ENCODE measurements at regions of chr15 and their contacts with region 1.

Region 1: DNA sequence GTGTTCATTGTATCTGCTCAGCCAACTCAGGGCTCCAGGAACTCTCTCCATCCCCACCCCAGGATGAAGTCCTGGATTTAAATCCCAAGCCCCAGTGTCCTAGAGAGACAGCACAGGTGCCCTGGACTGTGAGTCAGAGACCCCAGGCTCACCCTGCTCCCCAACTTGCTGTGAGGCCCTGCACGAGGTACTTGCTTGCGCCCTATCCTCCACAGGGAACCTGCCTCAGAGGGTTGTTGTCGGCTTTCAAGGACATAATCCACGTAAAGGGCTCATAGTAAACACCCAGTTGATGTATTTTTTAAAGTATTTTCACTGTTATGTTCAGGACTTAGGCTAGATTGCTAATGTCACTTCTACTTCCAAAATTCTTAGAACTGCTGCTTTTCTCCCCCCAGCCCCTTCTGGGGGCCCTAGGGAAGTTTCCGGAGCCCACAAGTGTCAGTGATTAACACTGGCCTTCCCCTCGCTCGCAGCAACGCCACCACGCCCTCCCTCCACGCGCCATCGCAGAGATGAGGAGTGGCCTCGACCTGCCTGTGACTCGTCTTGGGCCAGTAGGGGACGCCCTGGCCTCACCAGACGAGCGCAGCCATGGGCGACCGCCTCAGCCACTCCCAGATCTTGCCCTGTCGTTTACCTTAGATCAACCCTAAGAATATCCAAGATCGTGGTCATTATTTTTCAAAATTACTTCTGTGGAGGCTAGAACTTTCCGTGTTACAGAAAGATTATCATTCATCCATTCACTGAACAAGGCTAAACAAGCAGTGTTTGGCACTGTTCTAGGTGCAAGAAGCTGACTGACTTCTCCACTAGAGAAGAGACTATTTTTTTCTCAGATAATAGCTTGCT is 6.0 kb upstream of the SRP14 start:
- DNase-seq: peak; percentile 87 to 92 (median 90)
- ATAC-seq: peak; percentile 99
- H3K4me3 ChIP-seq: no peak overlapping the region
- H3K27ac ChIP-seq: peak overlapping the region; percentile 32; the same call in 1 of the 3 replicates
- H3K4me1 ChIP-seq: peaks cover 18% of the 10 kb centered on the region in 2 experiments
- H3K27me3 ChIP-seq: no peaks in the 10 kb centered on the region
- CTCF ChIP-seq: peak; percentile 97 to 98 (median 97)
- EP300 ChIP-seq: no peak
- POLR2A ChIP-seq: no peak
- RAD21 ChIP-seq: peak; percentile 96 to 98

Region 2: DNA sequence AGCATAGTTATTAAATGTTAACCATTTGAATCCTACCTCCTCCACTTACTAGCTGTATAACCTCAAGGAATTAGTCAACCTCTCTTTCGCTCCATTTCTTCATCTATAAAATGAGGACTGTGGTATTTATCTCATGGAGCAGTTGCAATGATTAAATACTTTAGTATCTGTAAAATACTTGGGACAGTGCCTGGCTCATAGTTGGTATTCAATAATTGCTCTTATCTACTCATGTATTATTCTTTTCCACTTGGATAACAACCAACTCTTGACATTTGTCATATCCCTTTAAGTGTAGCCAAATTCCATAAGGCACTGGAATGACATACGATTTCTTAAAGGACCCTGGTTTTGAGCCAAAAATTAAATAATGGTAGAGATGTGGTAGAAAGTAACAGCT is 334.3 kb before region 1 on chr15:
- CTCF ChIA-PET with region 1: no interaction called
- POLR2A ChIA-PET with region 1: no interaction called
- in situ Hi-C with region 1: no loop called
- intact Hi-C with region 1: no loop called
- DNase-seq: no peak
- ATAC-seq: no peak
- H3K4me3 ChIP-seq: no peak overlapping the region
- H3K27ac ChIP-seq: no peak overlapping the region
- H3K4me1 ChIP-seq: no peaks in the 10 kb centered on the region; a peak in 2 of 5 replicates
- H3K27me3 ChIP-seq: no peaks in the 10 kb centered on the region
- CTCF ChIP-seq: no peak
- EP300 ChIP-seq: no peak
- POLR2A ChIP-seq: no peak
- RAD21 ChIP-seq: no peak

Region 3: GRCh38 chr15:39782441-39783138 is 262.4 kb before region 1 on chr15 and contains the start of gene FSIP1:
- CTCF ChIA-PET with region 1: no interaction called
- POLR2A ChIA-PET with region 1: interaction called, 4 read pairs
- in situ Hi-C with region 1: no loop called
- intact Hi-C with region 1: loop called (anchors 5 kb)
- DNase-seq: peak; percentile 97 to 98 (median 98)
- ATAC-seq: peak; percentile 99
- H3K4me3 ChIP-seq: peak within 1 kb of the TSS; percentile 78
- H3K27ac ChIP-seq: peak within 1 kb of the TSS; percentile 74
- H3K4me1 ChIP-seq: peaks cover 0 to 8% of the 10 kb centered on the region in 2 experiments; a peak in 3 of 5 replicates
- H3K27me3 ChIP-seq: no peaks in the 10 kb centered on the region
- CTCF ChIP-seq: peak in 1 of 3 experiments; percentile 30; a peak in 1 of 6 replicates
- EP300 ChIP-seq: no peak
- POLR2A ChIP-seq: peak; percentile 76
- RAD21 ChIP-seq: no peak
- polyA plus RNA-seq, gene FSIP1: 0.07 to 0.20 TPM

Region 4: DNA sequence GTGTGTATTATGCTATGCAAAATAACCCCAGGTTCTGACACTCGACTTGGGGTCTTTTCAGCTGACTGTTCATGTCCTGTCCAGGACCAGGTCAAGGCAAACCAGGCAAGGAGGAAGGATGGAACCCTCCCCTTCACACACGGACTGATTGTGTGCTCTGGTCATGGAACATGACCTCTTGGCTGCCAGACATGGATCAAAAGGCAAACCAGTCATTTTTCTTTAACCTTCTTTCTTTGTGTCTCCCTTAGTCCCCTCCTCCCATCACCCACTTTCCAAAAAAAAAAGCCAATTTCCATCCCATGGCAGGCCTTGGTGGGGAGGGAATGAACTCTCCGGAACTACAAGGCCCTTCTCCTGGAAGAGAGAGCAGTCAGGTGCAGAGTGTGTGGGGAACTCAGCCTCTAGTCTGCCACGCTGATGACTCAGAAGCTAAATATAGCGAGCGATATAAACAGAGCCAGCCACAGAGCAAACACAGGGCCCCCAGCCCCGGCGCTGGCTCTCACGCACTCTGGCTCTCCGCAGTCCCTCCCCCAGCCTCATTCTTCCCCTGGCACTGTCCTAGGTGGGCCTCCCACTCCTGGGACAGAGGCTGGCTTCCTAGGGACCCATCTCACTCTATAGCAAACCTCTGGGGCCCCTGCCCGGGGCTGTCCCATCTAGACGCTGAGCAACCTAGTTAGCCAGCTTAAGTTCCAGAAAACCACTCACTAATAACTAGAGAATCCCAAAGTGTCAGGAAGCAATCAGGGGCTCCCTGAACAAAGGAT is 53.7 kb after region 1 on chr15:
- CTCF ChIA-PET with region 1: no interaction called
- POLR2A ChIA-PET with region 1: interaction called, 3 read pairs
- in situ Hi-C with region 1: no loop called
- intact Hi-C with region 1: loop called (anchors 1 kb)
- DNase-seq: peak; percentile 62 to 89 (median 77)
- ATAC-seq: peak; percentile 93
- H3K4me3 ChIP-seq: peak overlapping the region; percentile 9; the same call in 1 of the 2 replicates
- H3K27ac ChIP-seq: peak overlapping the region; percentile 78
- H3K4me1 ChIP-seq: peaks cover 37 to 60% of the 10 kb centered on the region in 2 experiments
- H3K27me3 ChIP-seq: no peaks in the 10 kb centered on the region
- CTCF ChIP-seq: no peak
- EP300 ChIP-seq: peak; percentile 76
- POLR2A ChIP-seq: 0 out of 2 replicates have a peak, but pooled peaks have one; percentile 41
- RAD21 ChIP-seq: 0 out of 4 replicates have a peak, but pooled peaks of 1 of the 2 experiments have one; percentile 11

Region 5: DNA sequence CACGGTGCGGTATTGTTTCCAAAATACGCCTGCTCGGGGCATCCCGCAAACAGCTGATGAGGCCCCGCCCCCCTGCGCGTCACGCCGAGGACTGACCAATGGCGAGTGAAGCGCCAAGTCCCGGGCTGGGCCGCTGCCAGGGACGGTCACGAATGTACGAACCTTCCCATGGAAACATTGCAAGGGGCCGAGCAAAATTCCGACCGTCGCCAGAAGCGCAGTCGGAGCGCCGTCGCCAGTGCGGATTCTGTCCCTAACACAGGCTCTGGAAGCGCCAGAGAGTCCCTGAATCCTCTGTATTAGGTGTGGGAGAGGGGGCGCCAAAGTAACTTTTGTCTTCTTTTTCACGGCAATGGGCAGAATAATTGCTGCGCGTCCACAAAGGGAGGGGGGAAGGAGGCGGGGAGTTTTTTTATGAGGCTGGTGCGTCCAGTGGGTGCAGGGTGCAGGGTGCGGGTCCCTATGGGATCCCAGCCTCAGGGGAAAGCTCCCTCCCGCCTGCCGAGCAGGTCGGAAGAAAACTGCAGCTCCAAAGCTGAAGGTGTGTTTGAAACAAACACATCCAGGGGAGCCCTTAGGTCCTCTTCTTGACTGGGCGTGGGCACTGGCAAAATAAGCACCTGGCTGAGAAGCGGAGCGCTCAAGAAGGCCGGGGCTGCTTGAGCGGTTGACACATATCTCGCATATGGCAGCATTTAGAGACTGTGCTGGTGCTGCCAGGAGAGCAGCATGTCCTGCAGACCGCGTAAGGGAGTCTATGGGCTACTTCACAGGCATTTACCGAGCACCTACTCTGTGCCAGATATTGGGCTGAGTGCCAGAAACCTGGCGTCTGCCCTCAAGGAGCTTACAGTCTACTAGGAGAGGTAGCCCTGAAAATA is 64.2 kb after region 1 on chr15 and contains the start of gene BMF:
- CTCF ChIA-PET with region 1: interaction called, 7 read pairs
- POLR2A ChIA-PET with region 1: no interaction called
- in situ Hi-C with region 1: no loop called
- intact Hi-C with region 1: loop called (anchors 2 kb)
- DNase-seq: peak; percentile 96 to 99 (median 97)
- ATAC-seq: peak; percentile 85
- H3K4me3 ChIP-seq: peak within 1 kb of the TSS; percentile 62
- H3K27ac ChIP-seq: peak within 1 kb of the TSS; percentile 29; the same call in 1 of the 3 replicates
- H3K4me1 ChIP-seq: peaks cover 40 to 45% of the 10 kb centered on the region in 2 experiments
- H3K27me3 ChIP-seq: peaks cover 3% of the 10 kb centered on the region in 2 experiments; a peak in 1 of 5 replicates
- CTCF ChIP-seq: peak; percentile 69 to 79 (median 73)
- EP300 ChIP-seq: peak; percentile 63
- POLR2A ChIP-seq: no peak
- RAD21 ChIP-seq: peak; percentile 45 to 47
- polyA plus RNA-seq, gene BMF: not detected

Region 6: DNA sequence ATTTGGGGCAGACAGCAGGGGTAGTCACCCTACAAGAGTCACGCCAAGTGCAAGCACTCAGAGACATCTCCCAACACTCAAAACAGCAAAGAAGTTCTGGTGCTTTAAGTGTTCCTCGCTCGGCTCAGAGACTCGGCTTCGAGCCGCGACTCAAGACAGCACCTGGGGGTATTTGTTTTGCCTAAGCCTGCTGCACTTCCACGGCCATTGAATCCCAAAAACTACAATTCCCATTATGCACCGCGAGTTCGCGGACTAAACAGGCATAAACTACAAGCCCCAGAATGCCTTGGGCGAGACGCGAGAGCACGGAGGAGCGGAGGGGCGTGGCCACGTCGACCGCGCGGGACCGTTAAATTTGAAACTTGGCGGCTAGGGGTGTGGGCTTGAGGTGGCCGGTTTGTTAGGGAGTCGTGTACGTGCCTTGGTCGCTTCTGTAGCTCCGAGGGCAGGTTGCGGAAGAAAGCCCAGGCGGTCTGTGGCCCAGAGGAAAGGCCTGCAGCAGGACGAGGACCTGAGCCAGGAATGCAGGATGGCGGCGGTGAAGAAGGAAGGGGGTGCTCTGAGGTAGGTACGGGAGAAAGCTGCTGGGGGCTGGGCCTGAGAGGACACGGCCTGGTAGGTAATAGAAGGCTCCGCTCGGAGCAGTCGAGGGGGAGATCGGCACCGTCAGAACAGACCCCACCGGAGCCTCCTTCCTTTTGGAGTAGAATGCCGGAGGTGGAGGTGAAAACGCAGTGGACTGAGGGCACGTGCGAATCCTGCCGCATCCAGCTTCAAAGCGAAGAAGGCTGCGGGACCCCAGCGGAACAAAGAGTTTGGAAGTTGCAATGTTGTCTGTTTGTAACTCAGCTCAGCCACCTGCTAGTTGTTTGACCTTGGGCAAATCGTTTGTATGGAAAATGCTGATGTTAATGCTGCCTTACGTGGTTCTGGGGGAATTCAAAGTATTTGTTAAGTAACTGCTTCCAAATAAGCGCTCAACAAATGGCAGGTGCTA is 116.0 kb after region 1 on chr15 and contains the start of gene BUB1B:
- CTCF ChIA-PET with region 1: no interaction called
- POLR2A ChIA-PET with region 1: interaction called, 15 read pairs
- in situ Hi-C with region 1: no loop called
- intact Hi-C with region 1: loop called (anchors 5 kb)
- DNase-seq: peak; percentile 94 to 97 (median 96)
- ATAC-seq: peak; percentile 95
- H3K4me3 ChIP-seq: peak within 1 kb of the TSS; percentile 68
- H3K27ac ChIP-seq: peak within 1 kb of the TSS; percentile 90
- H3K4me1 ChIP-seq: peaks cover 0 to 15% of the 10 kb centered on the region in 2 experiments; a peak in 3 of 5 replicates
- H3K27me3 ChIP-seq: no peaks in the 10 kb centered on the region
- CTCF ChIP-seq: no peak
- EP300 ChIP-seq: no peak
- POLR2A ChIP-seq: peak; percentile 94
- RAD21 ChIP-seq: no peak
- polyA plus RNA-seq, gene BUB1B: 28.7 to 43.3 TPM

Region 7: DNA sequence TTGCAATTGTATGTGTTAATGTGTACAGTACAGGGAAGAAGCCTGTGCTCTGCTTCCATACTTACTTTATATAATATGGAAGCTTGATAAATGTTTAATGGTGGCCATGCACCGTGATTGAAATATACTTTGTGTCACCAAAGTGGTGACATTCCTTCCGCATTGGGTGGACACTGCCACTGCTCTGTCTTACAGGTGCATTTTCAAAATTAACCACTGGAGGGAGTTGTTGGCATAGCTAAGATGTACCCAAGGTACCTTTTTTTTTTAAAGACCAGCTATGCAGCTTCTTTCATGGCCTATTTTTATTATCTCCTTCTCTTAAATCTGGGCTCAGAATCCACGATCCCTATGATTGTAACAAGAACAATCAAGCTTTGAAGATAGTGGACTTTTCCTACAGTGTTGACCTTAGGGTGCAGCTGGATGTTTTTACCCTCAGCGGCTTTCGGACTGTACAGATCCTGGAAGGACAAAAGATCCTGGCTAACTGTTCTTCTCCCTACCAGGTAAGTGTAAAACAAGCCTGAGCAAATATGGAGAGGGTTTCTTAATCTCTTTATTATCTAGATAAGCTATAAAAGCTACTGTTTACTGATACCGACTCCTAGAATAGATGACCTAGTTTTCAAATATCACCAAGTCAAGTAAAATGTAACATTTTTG is 172.3 kb after region 1 on chr15:
- CTCF ChIA-PET with region 1: interaction called, 9 read pairs
- POLR2A ChIA-PET with region 1: interaction called, 3 read pairs
- in situ Hi-C with region 1: no loop called
- intact Hi-C with region 1: loop called (anchors 2 kb)
- DNase-seq: peak; percentile 63 to 79 (median 67)
- ATAC-seq: peak; percentile 96
- H3K4me3 ChIP-seq: no peak overlapping the region
- H3K27ac ChIP-seq: no peak overlapping the region
- H3K4me1 ChIP-seq: no peaks in the 10 kb centered on the region
- H3K27me3 ChIP-seq: no peaks in the 10 kb centered on the region
- CTCF ChIP-seq: peak; percentile 80 to 97 (median 93)
- EP300 ChIP-seq: no peak
- POLR2A ChIP-seq: no peak
- RAD21 ChIP-seq: peak; percentile 89 to 90

Region 8: GRCh38 chr15:40344631-40345120 is 299.7 kb after region 1 on chr15:
- CTCF ChIA-PET with region 1: no interaction called
- POLR2A ChIA-PET with region 1: no interaction called
- in situ Hi-C with region 1: no loop called
- intact Hi-C with region 1: no loop called
- DNase-seq: peak; percentile 78 to 81 (median 78)
- ATAC-seq: peak; percentile 75
- H3K4me3 ChIP-seq: no peak overlapping the region
- H3K27ac ChIP-seq: no peak overlapping the region
- H3K4me1 ChIP-seq: peaks cover 7 to 24% of the 10 kb centered on the region in 2 experiments; a peak in 4 of 5 replicates
- H3K27me3 ChIP-seq: no peaks in the 10 kb centered on the region
- CTCF ChIP-seq: peak; percentile 87 to 91 (median 87)
- EP300 ChIP-seq: no peak
- POLR2A ChIP-seq: no peak
- RAD21 ChIP-seq: peak; percentile 49 to 80

Measured in K562 (cell line).